ENCODE measurements at regions of chr3 and their contacts with region 1.

Region 1: DNA sequence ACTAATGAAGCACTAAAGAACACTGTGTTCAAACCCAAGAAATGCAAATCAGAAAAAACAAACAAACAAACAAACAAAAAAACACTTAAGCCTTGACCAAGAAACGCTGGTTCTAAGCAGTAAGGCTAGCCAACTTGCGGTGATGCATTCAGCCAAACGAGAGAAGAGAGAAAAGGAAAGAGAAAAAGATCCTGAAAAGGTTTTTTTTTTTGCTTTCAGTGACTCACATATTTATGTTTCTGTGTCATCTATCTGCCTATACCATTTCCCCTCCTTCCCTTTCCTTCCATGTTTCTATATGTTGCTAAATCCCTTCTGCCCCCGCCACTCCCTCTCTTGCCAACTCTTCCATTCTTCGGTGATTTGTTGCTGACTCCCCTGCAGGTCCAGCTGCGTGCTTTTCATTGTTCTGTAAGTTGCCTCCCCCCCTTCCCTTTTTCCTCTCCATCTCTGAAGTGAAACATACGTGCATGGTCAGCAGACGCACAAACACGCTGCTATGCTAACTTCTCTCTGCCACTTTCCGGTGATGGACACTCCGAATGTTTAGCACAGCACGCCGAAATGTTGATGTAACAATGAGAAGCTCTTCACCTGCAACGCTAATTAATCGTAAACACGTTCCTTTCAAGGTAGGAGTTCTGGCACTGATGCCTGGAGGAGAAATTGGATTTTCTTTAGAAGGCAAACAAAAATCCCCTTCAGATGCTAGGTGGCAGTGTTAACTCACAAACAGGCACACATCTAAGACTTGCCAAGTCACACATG is 154.4 kb downstream of the TUSC7 start:
- DNase-seq: peak; percentile 64
- ATAC-seq: peak; percentile 66
- H3K4me3 ChIP-seq: peak overlapping the region; percentile 82
- H3K27ac ChIP-seq: no peak overlapping the region
- H3K4me1 ChIP-seq: no peaks in the 10 kb centered on the region
- H3K27me3 ChIP-seq: no peaks in the 10 kb centered on the region
- CTCF ChIP-seq: peak; percentile 66
- POLR2A ChIP-seq: no peak
- RAD21 ChIP-seq: peak; percentile 74

Region 2: GRCh38 chr3:117059067-117059955 is 195.3 kb after region 1 on chr3:
- CTCF ChIA-PET with region 1: no interaction called
- POLR2A ChIA-PET with region 1: no interaction called
- dilution Hi-C with region 1: no loop called
- in situ Hi-C with region 1: no loop called
- intact Hi-C with region 1: loop called (anchors 5 kb)
- DNase-seq: peak; percentile 46
- ATAC-seq: no peak
- H3K4me3 ChIP-seq: no peak overlapping the region
- H3K27ac ChIP-seq: no peak overlapping the region
- H3K4me1 ChIP-seq: peaks cover 3% of the 10 kb centered on the region; the same call in 1 of the 2 replicates
- H3K27me3 ChIP-seq: no peaks in the 10 kb centered on the region
- CTCF ChIP-seq: peak; percentile 62
- POLR2A ChIP-seq: no peak
- RAD21 ChIP-seq: peak; percentile 50

Region 3: GRCh38 chr3:117350371-117350770 is 486.4 kb after region 1 on chr3:
- CTCF ChIA-PET with region 1: no interaction called
- POLR2A ChIA-PET with region 1: no interaction called
- dilution Hi-C with region 1: no loop called
- in situ Hi-C with region 1: no loop called
- intact Hi-C with region 1: loop called (anchors 5 kb)
- DNase-seq: no peak
- ATAC-seq: no peak
- H3K4me3 ChIP-seq: no peak overlapping the region
- H3K27ac ChIP-seq: no peak overlapping the region
- H3K4me1 ChIP-seq: no peaks in the 10 kb centered on the region
- H3K27me3 ChIP-seq: no peaks in the 10 kb centered on the region
- CTCF ChIP-seq: no peak
- POLR2A ChIP-seq: no peak
- RAD21 ChIP-seq: no peak

Region 4: DNA sequence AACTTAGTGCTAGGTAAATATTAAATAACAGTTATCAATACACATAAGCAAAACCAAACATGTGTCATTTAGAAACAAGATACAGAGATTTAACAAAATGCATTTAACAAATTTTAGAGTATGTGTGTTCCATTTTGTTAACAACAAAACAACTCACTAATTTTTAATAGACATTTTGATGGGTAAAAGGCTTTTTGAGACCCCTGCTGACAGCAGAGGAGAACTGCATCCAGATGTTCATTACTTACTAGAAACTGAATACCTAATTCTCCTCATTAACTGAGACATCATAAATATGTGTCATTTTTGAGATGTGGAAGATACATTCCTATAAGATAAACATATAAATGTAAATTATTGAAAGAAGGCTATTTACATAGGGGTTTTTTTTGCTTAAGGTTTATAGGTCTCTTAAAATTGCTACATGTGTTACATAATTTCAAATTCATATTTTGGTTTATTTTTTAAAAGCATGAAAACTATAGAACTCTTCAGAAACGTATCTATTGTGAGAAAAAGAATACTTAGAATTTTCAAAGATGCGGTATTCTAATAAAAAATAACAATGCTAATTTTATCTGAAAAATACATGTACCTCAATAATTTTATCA is 855.4 kb after region 1 on chr3:
- CTCF ChIA-PET with region 1: no interaction called
- POLR2A ChIA-PET with region 1: no interaction called
- dilution Hi-C with region 1: no loop called
- in situ Hi-C with region 1: loop called (anchors 25 kb)
- intact Hi-C with region 1: loop called (anchors 1 kb)
- DNase-seq: peak; percentile 40
- ATAC-seq: peak; percentile 62
- H3K4me3 ChIP-seq: no peak overlapping the region
- H3K27ac ChIP-seq: no peak overlapping the region
- H3K4me1 ChIP-seq: no peaks in the 10 kb centered on the region
- H3K27me3 ChIP-seq: no peaks in the 10 kb centered on the region
- CTCF ChIP-seq: peak; percentile 72
- POLR2A ChIP-seq: no peak
- RAD21 ChIP-seq: peak; percentile 75

Region 5: GRCh38 chr3:118628704-118629341 is 1764.8 kb after region 1 on chr3:
- CTCF ChIA-PET with region 1: no interaction called
- POLR2A ChIA-PET with region 1: no interaction called
- dilution Hi-C with region 1: no loop called
- in situ Hi-C with region 1: no loop called
- intact Hi-C with region 1: loop called (anchors 1 kb)
- DNase-seq: peak; percentile 72
- ATAC-seq: peak; percentile 100
- H3K4me3 ChIP-seq: no peak overlapping the region
- H3K27ac ChIP-seq: no peak overlapping the region
- H3K4me1 ChIP-seq: no peaks in the 10 kb centered on the region
- H3K27me3 ChIP-seq: no peaks in the 10 kb centered on the region
- CTCF ChIP-seq: peak; percentile 79
- POLR2A ChIP-seq: no peak
- RAD21 ChIP-seq: peak; percentile 83

Region 6: DNA sequence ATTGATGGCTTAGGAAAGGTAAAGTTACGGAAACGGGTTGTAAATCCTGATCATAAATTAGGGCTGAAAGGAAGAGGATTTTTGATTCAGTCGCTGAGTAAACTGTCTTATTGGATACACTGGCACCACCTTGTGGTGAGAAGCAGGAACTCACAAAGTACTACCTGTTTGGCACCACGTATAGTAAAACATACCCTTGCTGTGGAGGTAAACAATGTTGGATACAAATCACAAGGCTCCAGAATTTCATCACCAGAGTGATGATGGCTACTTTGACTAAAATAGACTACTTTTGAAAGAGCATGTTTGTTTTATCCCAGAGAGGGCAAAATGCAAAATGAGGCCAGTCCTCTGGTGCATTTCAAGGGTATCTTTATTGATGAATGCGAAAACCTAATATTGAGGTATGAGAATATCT is 1953.8 kb after region 1 on chr3:
- CTCF ChIA-PET with region 1: no interaction called
- POLR2A ChIA-PET with region 1: no interaction called
- dilution Hi-C with region 1: no loop called
- in situ Hi-C with region 1: no loop called
- intact Hi-C with region 1: loop called (anchors 5 kb)
- DNase-seq: peak; percentile 57
- ATAC-seq: peak; percentile 83
- H3K4me3 ChIP-seq: no peak overlapping the region
- H3K27ac ChIP-seq: no peak overlapping the region
- H3K4me1 ChIP-seq: no peaks in the 10 kb centered on the region
- H3K27me3 ChIP-seq: peaks cover 1% of the 10 kb centered on the region; the same call in 1 of the 2 replicates
- CTCF ChIP-seq: peak; percentile 70
- POLR2A ChIP-seq: no peak
- RAD21 ChIP-seq: peak; percentile 62